SK-N-SH (cell line): ENCODE measurements at regions of chr16 and their contacts with region 1.

Region 1: GRCh38 chr16:69123910-69124309 is 8.5 kb downstream of the CHTF8 start:
- DNase-seq: peak; percentile 65
- H3K4me3 ChIP-seq: no peak overlapping the region
- H3K27ac ChIP-seq: no peak overlapping the region
- H3K4me1 ChIP-seq: no peaks in the 10 kb centered on the region
- H3K27me3 ChIP-seq: no peaks in the 10 kb centered on the region
- CTCF ChIP-seq: peak; percentile 82
- EP300 ChIP-seq: no peak
- RAD21 ChIP-seq: peak; percentile 89

Region 2: GRCh38 chr16:68658258-68659008 is 465.5 kb before region 1 on chr16:
- CTCF ChIA-PET with region 1: no interaction called
- POLR2A ChIA-PET with region 1: no interaction called
- DNase-seq: no peak
- H3K4me3 ChIP-seq: no peak overlapping the region
- H3K27ac ChIP-seq: no peak overlapping the region
- H3K4me1 ChIP-seq: no peaks in the 10 kb centered on the region
- H3K27me3 ChIP-seq: no peaks in the 10 kb centered on the region
- CTCF ChIP-seq: no peak
- EP300 ChIP-seq: no peak
- RAD21 ChIP-seq: no peak

Region 3: GRCh38 chr16:68843482-68844210 is 280.3 kb before region 1 on chr16 and contains the start of gene TANGO6:
- CTCF ChIA-PET with region 1: interaction called, 73 read pairs
- POLR2A ChIA-PET with region 1: interaction called, 3 read pairs
- DNase-seq: peak; percentile 89
- H3K4me3 ChIP-seq: peak within 1 kb of the TSS; percentile 69 to 82
- H3K27ac ChIP-seq: peak within 1 kb of the TSS; percentile 69 to 88
- H3K4me1 ChIP-seq: peaks cover 0 to 3% of the 10 kb centered on the region in 2 experiments; a peak in 2 of 4 replicates
- H3K27me3 ChIP-seq: no peaks in the 10 kb centered on the region
- CTCF ChIP-seq: peak; percentile 52
- EP300 ChIP-seq: no peak
- RAD21 ChIP-seq: peak; percentile 45
- polyA plus RNA-seq, gene TANGO6: 5.5 and 6.5 TPM in 2 replicates

Region 4: DNA sequence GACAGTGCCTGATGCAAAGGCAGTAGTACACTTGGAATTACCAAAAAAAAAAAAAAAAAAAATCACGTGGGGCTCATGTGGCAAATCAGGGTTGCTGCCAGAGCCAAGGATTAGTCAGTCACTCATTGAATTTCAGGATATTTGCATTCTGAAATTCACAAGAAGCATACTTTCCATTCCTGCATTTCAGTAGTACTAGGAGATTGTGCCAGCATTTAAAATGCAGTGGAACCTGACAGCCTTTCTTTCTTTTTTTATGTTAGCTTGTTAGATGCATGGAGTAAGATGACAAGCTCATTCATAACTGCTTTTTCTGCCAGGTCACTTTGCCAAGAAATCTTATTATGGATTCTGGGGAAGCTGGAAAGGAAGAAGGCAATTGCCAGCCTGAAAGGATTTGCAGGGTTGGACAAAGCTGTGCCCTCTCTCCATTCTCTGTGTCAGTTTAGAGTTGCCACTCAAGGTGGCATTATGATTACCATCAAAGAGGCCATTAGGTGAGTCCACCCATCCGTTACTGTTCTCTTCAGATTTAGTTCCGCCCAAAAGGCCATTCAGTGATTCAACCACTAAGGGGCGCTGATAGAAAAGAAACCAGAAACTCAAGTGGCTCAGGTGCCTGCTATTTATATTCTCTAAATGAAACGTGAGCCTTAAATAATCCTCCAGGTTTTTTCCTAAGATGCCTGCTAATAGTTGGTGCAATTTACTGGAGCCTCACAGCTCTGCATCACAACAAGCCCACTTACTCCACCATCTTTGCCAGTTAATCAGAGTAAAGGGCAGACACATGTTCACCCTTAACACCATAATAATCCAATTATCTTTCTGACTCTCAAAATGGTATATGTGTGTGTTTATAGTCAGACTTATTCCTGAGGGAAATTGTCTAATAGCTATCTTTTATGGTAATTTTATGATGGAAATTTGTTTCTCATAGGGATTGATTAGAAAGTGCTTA is 221.6 kb before region 1 on chr16:
- CTCF ChIA-PET with region 1: interaction called, 91 read pairs
- POLR2A ChIA-PET with region 1: no interaction called
- DNase-seq: peak; percentile 55
- H3K4me3 ChIP-seq: no peak overlapping the region; a peak in 1 of 4 replicates
- H3K27ac ChIP-seq: peak overlapping the region; percentile 17 to 35; a peak in 2 of 4 replicates
- H3K4me1 ChIP-seq: peaks cover 2 to 9% of the 10 kb centered on the region in 2 experiments
- H3K27me3 ChIP-seq: no peaks in the 10 kb centered on the region
- CTCF ChIP-seq: peak; percentile 92
- EP300 ChIP-seq: peak in 1 of 2 experiments; percentile 3; a peak in 1 of 4 replicates
- RAD21 ChIP-seq: peak; percentile 86

Region 5: GRCh38 chr16:69049146-69049545 is 74.8 kb before region 1 on chr16:
- CTCF ChIA-PET with region 1: no interaction called
- POLR2A ChIA-PET with region 1: no interaction called
- DNase-seq: no peak
- H3K4me3 ChIP-seq: no peak overlapping the region
- H3K27ac ChIP-seq: peak overlapping the region in 1 of 2 experiments; percentile 63; a peak in 2 of 4 replicates
- H3K4me1 ChIP-seq: peaks cover 0 to 7% of the 10 kb centered on the region in 2 experiments; a peak in 2 of 4 replicates
- H3K27me3 ChIP-seq: no peaks in the 10 kb centered on the region
- CTCF ChIP-seq: no peak
- EP300 ChIP-seq: peak in 1 of 2 experiments; percentile 18; a peak in 1 of 4 replicates
- RAD21 ChIP-seq: no peak

Region 6: GRCh38 chr16:69100071-69100691 is 23.7 kb before region 1 on chr16:
- CTCF ChIA-PET with region 1: interaction called, 18 read pairs
- POLR2A ChIA-PET with region 1: interaction called, 5 read pairs
- DNase-seq: peak; percentile 77
- H3K4me3 ChIP-seq: no peak overlapping the region
- H3K27ac ChIP-seq: peak overlapping the region in 1 of 2 experiments; percentile 12; a peak in 1 of 4 replicates
- H3K4me1 ChIP-seq: peaks cover 3 to 14% of the 10 kb centered on the region in 2 experiments; a peak in 3 of 4 replicates
- H3K27me3 ChIP-seq: no peaks in the 10 kb centered on the region
- CTCF ChIP-seq: no peak
- EP300 ChIP-seq: no peak
- RAD21 ChIP-seq: no peak

Region 7: DNA sequence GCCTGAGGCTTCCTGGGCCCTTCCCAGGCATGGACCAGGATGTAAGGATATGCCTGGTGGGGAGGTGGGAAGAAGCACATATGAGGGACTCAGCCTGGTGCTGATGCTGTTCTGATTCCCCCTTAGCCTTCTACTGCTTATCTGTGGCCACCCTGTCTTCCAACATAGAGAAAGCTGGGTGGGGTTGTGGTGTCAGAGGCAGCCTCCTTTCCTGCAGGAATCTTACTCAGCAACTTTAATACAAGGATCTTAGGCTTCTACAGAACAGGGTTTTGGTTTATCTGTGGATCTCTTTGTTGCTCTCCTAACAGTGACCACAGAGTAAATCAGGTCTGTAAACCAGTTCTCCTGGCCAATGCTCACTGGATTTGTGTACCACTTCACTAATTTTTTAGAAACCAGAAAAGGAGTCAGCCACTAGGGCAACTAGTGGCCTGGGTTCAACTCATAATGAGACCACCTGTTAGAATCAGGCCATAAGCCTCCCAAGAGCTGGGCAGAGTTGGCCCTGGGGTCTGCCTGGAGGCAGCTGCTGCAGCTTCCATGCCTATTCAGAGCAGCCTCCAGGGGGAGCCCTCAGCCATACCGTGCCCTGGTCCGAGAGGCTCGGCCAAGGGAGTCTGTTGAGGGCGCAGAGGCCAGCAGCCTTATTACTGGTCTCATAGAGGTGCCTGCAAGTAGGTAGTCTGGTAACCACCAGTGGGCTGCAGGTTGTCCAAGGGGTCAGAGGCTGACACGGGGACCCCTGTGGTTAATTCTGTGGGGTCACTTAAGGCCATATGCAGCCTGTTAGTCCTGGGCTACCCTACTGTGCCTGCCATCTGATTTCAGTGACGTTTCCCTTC is 11.4 kb before region 1 on chr16:
- CTCF ChIA-PET with region 1: interaction called, 62 read pairs
- POLR2A ChIA-PET with region 1: no interaction called
- DNase-seq: peak; percentile 82
- H3K4me3 ChIP-seq: no peak overlapping the region; a peak in 1 of 4 replicates
- H3K27ac ChIP-seq: no peak overlapping the region
- H3K4me1 ChIP-seq: no peaks in the 10 kb centered on the region; a peak in 1 of 4 replicates
- H3K27me3 ChIP-seq: no peaks in the 10 kb centered on the region
- CTCF ChIP-seq: peak; percentile 74
- EP300 ChIP-seq: no peak
- RAD21 ChIP-seq: peak; percentile 52